ENCODE measurements at regions of chr2 and their contacts with region 1.

Region 1: GRCh38 chr2:119407430-119408220 is 24.0 kb upstream of the TMEM37 start:
- DNase-seq: peak in 2 of 6 donors; percentile 34 to 63
- ATAC-seq: peak; percentile 73 to 93 (median 90)
- H3K4me3 ChIP-seq: no peak overlapping the region
- H3K27ac ChIP-seq: no peak overlapping the region
- H3K4me1 ChIP-seq: peaks cover 0 to 6% (median 5%) of the 10 kb centered on the region in 3 donors
- H3K27me3 ChIP-seq: no peaks in the 10 kb centered on the region
- CTCF ChIP-seq: peak; percentile 50 to 69 (median 66)

Region 2: GRCh38 chr2:119469661-119470297 is 62.2 kb after region 1 on chr2:
- intact Hi-C with region 1: loop called in 1 of 3 experiments (anchors 5 kb)
- DNase-seq: no peak
- ATAC-seq: no peak
- H3K4me3 ChIP-seq: no peak overlapping the region
- H3K27ac ChIP-seq: no peak overlapping the region
- H3K4me1 ChIP-seq: no peaks in the 10 kb centered on the region
- H3K27me3 ChIP-seq: no peaks in the 10 kb centered on the region
- CTCF ChIP-seq: no peak

Region 3: GRCh38 chr2:119476301-119477021 is 68.8 kb after region 1 on chr2:
- intact Hi-C with region 1: loop called in 2 of 3 experiments (anchors 2 to 5 kb)
- DNase-seq: peak in 5 of 6 donors; percentile 61 to 80 (median 73)
- ATAC-seq: peak; percentile 64 to 88 (median 82)
- H3K4me3 ChIP-seq: peak overlapping the region in 2 of 4 donors; percentile 31 to 43
- H3K27ac ChIP-seq: peak overlapping the region in 2 of 4 donors; percentile 62 to 93
- H3K4me1 ChIP-seq: peaks cover 12 to 14% (median 13%) of the 10 kb centered on the region in 3 donors
- H3K27me3 ChIP-seq: no peaks in the 10 kb centered on the region
- CTCF ChIP-seq: peak; percentile 93 to 98 (median 95)

Region 4: GRCh38 chr2:119659601-119660342 is 252.1 kb after region 1 on chr2:
- intact Hi-C with region 1: loop called in 1 of 3 experiments (anchors 10 kb)
- DNase-seq: peak in 4 of 6 donors; percentile 26 to 68 (median 50)
- ATAC-seq: peak; percentile 64 to 91 (median 84)
- H3K4me3 ChIP-seq: no peak overlapping the region
- H3K27ac ChIP-seq: no peak overlapping the region
- H3K4me1 ChIP-seq: no peaks in the 10 kb centered on the region
- H3K27me3 ChIP-seq: no peaks in the 10 kb centered on the region
- CTCF ChIP-seq: peak; percentile 67 to 83 (median 68)